Dorsolateral prefrontal cortex (tissue), 120 donors: ENCODE measurements at regions of chr9 and their contacts with region 1.

Region 1: DNA sequence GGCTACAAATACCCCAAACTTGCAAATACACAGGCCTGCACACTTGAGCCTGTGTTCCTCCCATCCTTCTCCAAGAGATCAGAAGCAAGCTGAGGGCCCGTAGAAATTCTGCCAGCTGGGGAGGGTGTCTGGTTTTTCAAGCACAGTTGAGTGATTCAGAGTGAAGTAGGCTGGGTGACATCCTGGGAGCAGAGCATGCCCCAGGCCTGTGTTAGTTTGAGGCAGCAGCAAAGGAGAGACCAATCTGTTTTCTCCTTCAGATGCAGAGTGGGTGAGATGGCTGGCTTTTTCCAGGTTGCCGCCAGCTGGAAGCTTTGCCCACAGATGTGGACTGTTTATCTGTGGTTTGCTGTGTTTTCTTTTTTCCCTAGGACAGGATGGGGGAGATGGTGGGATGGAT is 63.1 kb downstream of the RCL1 start:
- DNase-seq: peak in 8 of 10 donors; percentile 36 to 80 (median 66)
- H3K4me3 ChIP-seq: no peak overlapping the region
- H3K27ac ChIP-seq: peak overlapping the region in 45 of 59 donors; percentile 3 to 84 (median 65)
- H3K27me3 ChIP-seq: no peaks in the 10 kb centered on the region
- CTCF ChIP-seq: no peak

Region 2: DNA sequence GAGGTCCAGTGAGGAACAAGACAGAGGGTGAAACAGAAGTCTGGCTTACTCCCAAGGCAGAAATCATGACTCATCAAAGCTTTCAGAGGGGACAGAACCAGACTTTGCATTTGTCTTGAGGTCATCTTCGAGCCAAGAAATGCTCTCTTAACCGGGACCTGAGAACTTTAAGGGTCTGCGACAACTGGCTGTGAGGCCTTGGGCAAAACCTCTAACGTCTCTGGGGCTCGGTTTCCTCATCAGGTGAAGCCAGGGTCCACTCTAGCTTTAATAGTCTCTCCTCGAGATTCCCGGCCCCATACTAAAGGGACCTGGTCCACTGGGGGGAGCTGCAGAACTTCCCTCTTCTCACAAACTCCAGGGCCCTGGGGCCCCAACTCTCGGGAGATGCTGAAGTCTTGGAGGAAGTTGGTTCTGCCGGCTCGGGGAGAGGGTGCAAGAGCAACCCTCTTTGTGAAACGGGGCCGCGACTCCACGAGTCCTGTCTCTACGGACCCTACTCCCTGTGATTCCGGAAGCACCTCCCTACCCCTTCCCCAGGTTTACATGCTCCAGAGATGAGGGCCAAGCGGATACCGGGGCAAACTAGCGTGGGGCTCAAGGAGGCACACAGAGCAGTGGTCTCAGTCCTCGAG is 558.6 kb before region 1 on chr9:
- intact Hi-C with region 1: no loop called
- DNase-seq: peak in 8 of 10 donors; percentile 41 to 64 (median 57)
- H3K4me3 ChIP-seq: peak overlapping the region; percentile 44 to 84 (median 69)
- H3K27ac ChIP-seq: peak overlapping the region in 57 of 59 donors; percentile 25 to 95 (median 80)
- H3K27me3 ChIP-seq: peaks cover 0 to 25% (median 0%) of the 10 kb centered on the region in 45 donors
- CTCF ChIP-seq: peak in 45 of 56 donors; percentile 15 to 54 (median 35)

Region 3: GRCh38 chr9:4837261-4838188 is 18.3 kb before region 1 on chr9:
- intact Hi-C with region 1: loop called in 1 of 2 experiments (anchors 2 kb)
- DNase-seq: no peak
- H3K4me3 ChIP-seq: no peak overlapping the region
- H3K27ac ChIP-seq: peak overlapping the region in 50 of 59 donors; percentile 5 to 92 (median 70)
- H3K27me3 ChIP-seq: no peaks in the 10 kb centered on the region
- CTCF ChIP-seq: no peak